Naive thymus-derived CD8-positive, alpha-beta T cell (primary cell): ENCODE measurements at regions of chr12 and their contacts with region 1.

Region 1: DNA sequence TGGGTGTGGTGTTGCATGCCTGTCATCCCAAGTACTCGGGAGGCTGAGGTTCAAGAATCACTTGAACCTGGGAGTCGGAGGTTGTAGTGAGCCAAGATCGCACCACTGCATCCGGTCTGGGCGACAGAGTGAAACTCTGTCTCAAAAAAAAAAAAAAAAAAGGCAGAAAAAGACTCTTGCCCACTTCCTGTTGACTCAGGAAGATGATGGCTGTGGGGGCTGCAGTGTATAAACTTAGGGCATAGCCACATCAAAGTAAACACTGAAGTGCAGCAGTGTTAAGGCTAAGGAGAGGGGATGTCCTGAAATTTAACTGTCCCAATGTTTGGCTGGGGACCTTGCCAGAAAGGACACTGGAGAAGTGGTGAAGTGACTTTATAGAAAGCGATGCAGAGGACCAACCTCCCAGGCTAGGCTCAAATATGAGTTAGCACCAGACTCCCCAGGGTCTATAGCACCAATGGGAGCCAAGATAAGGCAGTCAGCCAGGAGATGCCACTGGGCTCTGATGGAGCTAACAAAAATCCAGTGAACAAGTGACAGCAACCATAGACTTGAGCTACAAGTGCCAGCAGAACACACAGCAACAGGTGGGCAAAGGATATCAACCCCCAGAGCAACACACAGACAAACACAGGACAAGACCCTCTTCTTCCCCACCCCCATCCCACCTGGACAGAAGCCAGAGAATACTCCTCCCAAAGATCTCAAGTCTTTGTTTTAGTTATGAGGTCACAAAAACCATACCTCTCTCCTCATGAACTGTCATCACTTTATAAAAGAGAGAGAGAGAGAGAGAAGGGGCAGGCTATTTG is 28.0 kb downstream of the NELL2 start:
- DNase-seq: peak; percentile 45 to 91 (median 78)
- ATAC-seq: peak; percentile 82 to 91
- H3K4me3 Mint-ChIP-seq: peak overlapping the region; percentile 65 to 90 (median 82)
- H3K27ac Mint-ChIP-seq: peak overlapping the region; percentile 90 to 100 (median 98)
- H3K4me1 Mint-ChIP-seq: peaks cover 34 to 83% (median 82%) of the 10 kb centered on the region in 4 donors
- H3K27me3 Mint-ChIP-seq: no peaks in the 10 kb centered on the region

Region 2: DNA sequence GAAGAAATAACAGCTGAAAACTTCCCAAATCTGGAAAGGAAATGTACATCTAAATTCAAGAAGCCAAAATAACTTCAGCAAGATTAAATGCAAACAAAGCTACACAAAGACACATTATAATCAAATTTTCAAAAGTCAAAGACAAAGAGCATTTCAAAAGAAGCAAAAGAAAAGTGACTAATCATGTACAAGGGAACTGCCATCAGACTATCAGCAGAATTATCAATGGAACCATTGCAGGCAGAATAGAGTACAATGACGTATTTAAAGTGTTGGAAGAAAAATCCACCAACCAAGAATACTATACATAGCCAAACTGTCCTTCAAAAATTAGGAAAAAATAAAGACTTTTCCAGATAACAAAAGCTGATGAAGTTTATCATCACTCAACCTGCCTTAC is 119.5 kb before region 1 on chr12:
- POLR2A ChIA-PET with region 1: no interaction called
- DNase-seq: no peak
- ATAC-seq: no peak
- H3K4me3 Mint-ChIP-seq: peak overlapping the region in 2 of 10 donors; percentile 6 to 24
- H3K27ac Mint-ChIP-seq: peak overlapping the region in 1 of 10 donors; percentile 73
- H3K4me1 Mint-ChIP-seq: peaks cover 26 to 45% (median 41%) of the 10 kb centered on the region in 4 donors
- H3K27me3 Mint-ChIP-seq: no peaks in the 10 kb centered on the region

Region 3: DNA sequence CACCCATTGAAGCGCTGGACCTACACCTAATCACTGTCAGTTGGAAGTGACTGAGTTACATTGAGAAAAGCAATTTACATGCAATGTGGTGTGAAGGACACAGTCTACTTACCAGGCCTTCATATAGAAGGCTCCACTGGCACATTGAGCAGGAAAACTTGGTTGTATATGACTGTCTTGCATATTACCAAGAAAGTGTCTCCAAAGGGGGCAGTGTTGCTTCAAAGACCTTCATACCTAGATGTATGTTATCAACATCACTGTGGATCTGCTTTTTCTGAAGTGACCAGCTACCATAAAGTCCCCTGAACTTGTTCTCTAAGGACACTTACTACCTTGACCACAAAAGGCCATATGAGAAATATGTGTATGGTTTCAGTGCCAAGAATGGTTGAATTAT is 36.0 kb before region 1 on chr12:
- POLR2A ChIA-PET with region 1: interaction called, 10 read pairs
- DNase-seq: peak in 9 of 10 donors; percentile 27 to 77 (median 69)
- ATAC-seq: peak; percentile 79 to 89
- H3K4me3 Mint-ChIP-seq: peak overlapping the region in 7 of 10 donors; percentile 10 to 66 (median 51)
- H3K27ac Mint-ChIP-seq: peak overlapping the region; percentile 59 to 90 (median 82)
- H3K4me1 Mint-ChIP-seq: peaks cover 34 to 69% (median 63%) of the 10 kb centered on the region in 4 donors
- H3K27me3 Mint-ChIP-seq: no peaks in the 10 kb centered on the region

Region 4: DNA sequence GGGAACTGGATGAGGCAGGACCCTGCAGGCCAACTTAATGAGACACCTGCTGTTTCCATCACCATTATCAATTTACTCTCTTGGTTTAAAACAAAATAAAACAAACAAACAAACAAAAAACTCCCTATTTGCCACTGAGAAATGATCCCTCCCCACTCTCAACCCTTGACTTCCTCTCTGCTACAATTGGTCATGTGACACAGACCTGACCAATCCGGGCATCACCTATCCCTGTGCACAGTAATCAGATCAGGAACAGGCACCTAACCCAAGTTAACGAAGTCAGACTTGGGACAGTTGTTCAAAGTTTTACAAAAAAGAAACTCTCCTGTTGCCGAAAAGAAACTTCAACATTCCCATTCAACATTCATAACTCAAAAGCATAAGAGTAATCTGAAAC is 30.4 kb before region 1 on chr12:
- POLR2A ChIA-PET with region 1: interaction called, 11 read pairs
- DNase-seq: no peak
- ATAC-seq: peak in 1 of 2 donors; percentile 73
- H3K4me3 Mint-ChIP-seq: peak overlapping the region in 9 of 10 donors; percentile 13 to 72 (median 52)
- H3K27ac Mint-ChIP-seq: peak overlapping the region; percentile 69 to 94 (median 90)
- H3K4me1 Mint-ChIP-seq: peaks cover 41 to 84% (median 78%) of the 10 kb centered on the region in 4 donors
- H3K27me3 Mint-ChIP-seq: no peaks in the 10 kb centered on the region

Region 5: GRCh38 chr12:44827832-44828438 is 20.2 kb before region 1 on chr12:
- POLR2A ChIA-PET with region 1: interaction called, 75 read pairs
- DNase-seq: peak in 4 of 10 donors; percentile 34 to 88 (median 76)
- ATAC-seq: peak; percentile 83 to 93
- H3K4me3 Mint-ChIP-seq: peak overlapping the region; percentile 55 to 87 (median 77)
- H3K27ac Mint-ChIP-seq: peak overlapping the region; percentile 92 to 97 (median 96)
- H3K4me1 Mint-ChIP-seq: peaks cover 30 to 74% (median 65%) of the 10 kb centered on the region in 4 donors
- H3K27me3 Mint-ChIP-seq: no peaks in the 10 kb centered on the region

Region 6: GRCh38 chr12:44835641-44836379 is 12.3 kb before region 1 on chr12:
- POLR2A ChIA-PET with region 1: interaction called, 75 read pairs
- DNase-seq: peak in 5 of 10 donors; percentile 21 to 58 (median 44)
- ATAC-seq: peak; percentile 72 to 78
- H3K4me3 Mint-ChIP-seq: peak overlapping the region; percentile 72 to 91 (median 84)
- H3K27ac Mint-ChIP-seq: peak overlapping the region; percentile 83 to 97 (median 95)
- H3K4me1 Mint-ChIP-seq: peaks cover 48 to 94% (median 91%) of the 10 kb centered on the region in 4 donors
- H3K27me3 Mint-ChIP-seq: no peaks in the 10 kb centered on the region

Region 7: GRCh38 chr12:44863867-44864266 is 15.8 kb after region 1 on chr12:
- POLR2A ChIA-PET with region 1: interaction called, 31 read pairs
- DNase-seq: peak in 3 of 10 donors; percentile 61 to 80 (median 77)
- ATAC-seq: peak; percentile 77 to 93
- H3K4me3 Mint-ChIP-seq: peak overlapping the region; percentile 0 to 66 (median 38)
- H3K27ac Mint-ChIP-seq: peak overlapping the region; percentile 49 to 95 (median 88)
- H3K4me1 Mint-ChIP-seq: peaks cover 18 to 72% (median 67%) of the 10 kb centered on the region in 4 donors
- H3K27me3 Mint-ChIP-seq: no peaks in the 10 kb centered on the region

Region 8: GRCh38 chr12:44869503-44869902 is 21.4 kb after region 1 on chr12:
- POLR2A ChIA-PET with region 1: interaction called, 95 read pairs
- DNase-seq: no peak
- ATAC-seq: peak in 1 of 2 donors; percentile 36
- H3K4me3 Mint-ChIP-seq: peak overlapping the region; percentile 13 to 100 (median 76)
- H3K27ac Mint-ChIP-seq: peak overlapping the region; percentile 54 to 93 (median 86)
- H3K4me1 Mint-ChIP-seq: peaks cover 22 to 66% (median 56%) of the 10 kb centered on the region in 4 donors
- H3K27me3 Mint-ChIP-seq: peaks cover 0 to 5% (median 0%) of the 10 kb centered on the region in 5 donors

Region 9: GRCh38 chr12:44942714-44943113 is 94.6 kb after region 1 on chr12:
- POLR2A ChIA-PET with region 1: no interaction called
- DNase-seq: no peak
- ATAC-seq: no peak
- H3K4me3 Mint-ChIP-seq: no peak overlapping the region
- H3K27ac Mint-ChIP-seq: no peak overlapping the region
- H3K4me1 Mint-ChIP-seq: no peaks in the 10 kb centered on the region
- H3K27me3 Mint-ChIP-seq: peaks cover 0 to 10% (median 2%) of the 10 kb centered on the region in 5 donors